ENCODE measurements at regions of chr6 and their contacts with region 1.

Region 1: DNA sequence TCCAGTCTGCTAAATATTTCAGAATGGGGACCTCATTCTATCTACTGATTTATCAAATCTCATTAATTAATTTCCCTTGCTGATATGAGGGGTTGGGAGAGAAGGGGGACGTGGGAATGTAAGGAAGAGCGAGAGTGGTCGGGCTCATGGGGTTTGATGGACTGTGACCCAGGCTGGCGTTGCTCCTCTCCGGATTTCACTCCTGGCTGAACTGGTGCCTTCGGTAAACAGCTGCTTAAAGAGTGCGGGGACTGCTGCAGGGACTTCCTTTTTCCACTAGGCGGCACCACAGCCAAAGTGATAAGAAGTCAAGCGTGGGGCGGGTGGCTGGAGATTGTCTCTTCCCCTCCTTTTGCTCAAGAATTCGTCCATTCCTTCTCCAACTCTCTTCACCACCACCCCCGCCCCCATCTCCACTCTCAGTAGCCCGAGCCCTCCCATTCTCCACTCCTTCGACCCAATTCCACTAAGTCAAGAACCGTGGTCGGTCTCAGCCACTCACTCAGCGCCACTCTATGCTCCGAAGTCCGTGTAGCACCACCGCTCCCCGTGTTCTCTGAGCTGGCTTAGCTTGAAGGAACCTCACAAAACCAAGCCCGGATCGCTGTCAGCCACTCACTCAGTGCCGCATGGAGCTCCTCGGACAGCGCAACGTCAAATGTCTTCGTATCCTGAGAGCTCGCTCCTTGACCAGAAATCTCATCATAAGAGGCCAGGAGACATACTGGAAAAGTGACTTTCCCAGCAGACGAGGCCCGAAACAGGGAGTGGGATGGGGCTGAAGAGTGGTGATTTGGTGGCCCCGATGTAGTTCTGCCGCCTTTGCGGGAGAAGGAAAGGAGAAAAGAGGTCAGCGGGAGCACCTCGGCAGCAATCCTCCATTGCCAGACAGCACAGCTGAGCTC is 9.7 kb downstream of the TRIM31 start:
- DNase-seq: peak; percentile 73
- H3K4me3 ChIP-seq: peak overlapping the region; percentile 43 to 53 (median 43)
- H3K27ac ChIP-seq: no peak overlapping the region
- H3K4me1 ChIP-seq: peaks cover 33% of the 10 kb centered on the region
- H3K27me3 ChIP-seq: no peaks in the 10 kb centered on the region
- CTCF ChIP-seq: peak; percentile 91 to 94

Region 2: DNA sequence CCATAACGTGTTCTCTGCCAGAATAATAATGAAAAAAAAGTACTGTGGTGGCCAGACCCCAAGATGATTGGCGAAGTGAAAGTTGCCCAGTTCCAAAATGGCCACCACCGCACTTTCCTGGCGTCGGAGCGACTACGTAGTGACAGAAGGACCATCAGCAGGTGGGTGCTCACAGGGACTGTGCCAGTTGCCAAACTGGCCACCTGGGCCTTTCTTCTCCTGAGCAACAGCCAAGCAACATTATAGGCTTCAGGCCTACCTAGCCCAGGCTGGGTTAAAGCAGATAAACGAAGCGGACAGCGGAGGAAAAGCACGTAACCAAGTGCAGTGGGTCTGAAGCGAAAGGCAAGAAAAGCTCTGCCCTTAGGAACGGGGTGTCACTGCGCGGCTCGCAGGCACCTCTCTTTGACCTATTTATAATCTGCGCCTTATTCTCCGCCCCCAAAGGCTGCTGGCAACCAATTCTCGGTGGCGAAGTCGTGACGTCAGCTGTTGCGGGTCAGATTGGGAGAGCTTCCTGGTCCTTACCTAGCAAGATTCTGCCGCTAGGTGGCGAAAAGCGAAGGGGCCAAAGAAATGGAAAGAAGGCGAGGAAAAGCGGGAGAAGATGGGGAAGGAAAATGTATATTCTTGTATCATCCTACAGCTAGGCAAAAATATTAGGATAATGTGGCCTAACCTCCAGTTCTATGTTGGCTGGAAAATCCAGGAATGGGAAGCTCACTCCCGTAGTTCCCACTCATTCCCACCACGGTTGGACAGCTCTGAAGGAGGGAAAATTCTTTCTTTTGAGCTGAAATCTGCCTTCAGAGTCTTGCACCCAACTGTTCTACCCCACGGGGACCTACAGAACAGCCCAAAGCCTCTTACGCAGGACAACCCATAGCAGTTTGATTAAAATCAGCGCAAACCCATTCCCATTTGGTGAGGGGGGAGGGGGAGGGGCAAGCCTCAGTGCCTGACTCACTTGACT is 453.2 kb before region 1 on chr6:
- CTCF ChIA-PET with region 1: interaction called, 19 read pairs
- dilution Hi-C with region 1: no loop called
- in situ Hi-C with region 1: no loop called
- intact Hi-C with region 1: no loop called
- DNase-seq: peak; percentile 96
- H3K4me3 ChIP-seq: peak overlapping the region; percentile 57 to 60 (median 59)
- H3K27ac ChIP-seq: peak overlapping the region; percentile 68
- H3K4me1 ChIP-seq: peaks cover 6% of the 10 kb centered on the region
- H3K27me3 ChIP-seq: no peaks in the 10 kb centered on the region
- CTCF ChIP-seq: peak; percentile 93 to 98

Region 3: DNA sequence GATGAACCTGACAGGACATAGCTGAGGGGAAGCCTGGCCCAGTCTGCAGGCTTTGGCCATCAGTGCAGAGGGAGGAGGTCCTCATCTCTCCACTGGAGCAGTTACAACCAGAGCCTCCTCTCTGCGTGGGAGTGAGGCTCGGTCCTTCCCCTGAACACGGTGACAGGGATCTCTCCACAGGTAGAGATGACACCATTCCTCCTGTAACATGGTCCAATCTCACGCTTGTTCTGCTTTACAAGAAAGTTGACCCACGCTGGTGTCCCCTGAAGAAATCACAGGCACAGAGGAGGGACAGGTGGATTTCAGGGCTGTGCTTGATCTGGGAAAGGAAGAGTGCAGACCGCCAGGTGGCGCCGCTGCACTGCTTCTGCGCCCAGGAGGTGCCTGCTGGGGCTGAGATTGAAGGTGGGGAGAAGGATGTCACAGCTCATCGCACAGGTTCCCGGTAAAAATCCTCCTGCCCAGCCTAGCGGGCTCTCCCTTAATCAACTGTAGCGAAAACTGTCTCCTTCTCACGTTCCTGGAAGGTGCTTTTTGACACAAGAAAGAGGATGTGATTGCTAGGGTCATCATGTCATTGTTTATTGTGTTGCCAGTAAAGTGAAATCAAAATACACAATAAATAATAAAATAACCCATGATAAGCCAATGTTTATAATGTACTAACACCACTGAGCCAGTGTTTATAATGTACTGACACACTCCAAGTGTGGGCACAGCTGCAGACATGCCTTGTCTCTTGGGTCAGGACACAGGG is 255.2 kb before region 1 on chr6:
- CTCF ChIA-PET with region 1: no interaction called
- dilution Hi-C with region 1: no loop called
- in situ Hi-C with region 1: no loop called
- intact Hi-C with region 1: loop called (anchors 2 kb)
- DNase-seq: peak; percentile 56
- H3K4me3 ChIP-seq: no peak overlapping the region
- H3K27ac ChIP-seq: no peak overlapping the region
- H3K4me1 ChIP-seq: peaks cover 5% of the 10 kb centered on the region
- H3K27me3 ChIP-seq: no peaks in the 10 kb centered on the region
- CTCF ChIP-seq: peak; percentile 78 to 96

Region 4: GRCh38 chr6:30061092-30061857 is 41.9 kb before region 1 on chr6 and contains the start of gene POLR1H:
- CTCF ChIA-PET with region 1: interaction called, 4 read pairs
- dilution Hi-C with region 1: no loop called
- in situ Hi-C with region 1: no loop called
- intact Hi-C with region 1: loop called (anchors 1 kb)
- DNase-seq: peak; percentile 95
- H3K4me3 ChIP-seq: peak within 1 kb of the TSS; percentile 90 to 94 (median 91)
- H3K27ac ChIP-seq: peak within 1 kb of the TSS; percentile 87
- H3K4me1 ChIP-seq: peaks cover 27% of the 10 kb centered on the region
- H3K27me3 ChIP-seq: no peaks in the 10 kb centered on the region
- CTCF ChIP-seq: no peak
- total RNA-seq, gene POLR1H: 18.8 to 33.3 TPM

Region 5: GRCh38 chr6:30130887-30131862 is 28.0 kb after region 1 on chr6:
- CTCF ChIA-PET with region 1: interaction called, 19 read pairs
- dilution Hi-C with region 1: no loop called
- in situ Hi-C with region 1: no loop called
- intact Hi-C with region 1: loop called (anchors 1 kb)
- DNase-seq: peak; percentile 72
- H3K4me3 ChIP-seq: no peak overlapping the region
- H3K27ac ChIP-seq: no peak overlapping the region
- H3K4me1 ChIP-seq: peaks cover 3% of the 10 kb centered on the region
- H3K27me3 ChIP-seq: peaks cover 7% of the 10 kb centered on the region
- CTCF ChIP-seq: peak; percentile 100

Region 6: DNA sequence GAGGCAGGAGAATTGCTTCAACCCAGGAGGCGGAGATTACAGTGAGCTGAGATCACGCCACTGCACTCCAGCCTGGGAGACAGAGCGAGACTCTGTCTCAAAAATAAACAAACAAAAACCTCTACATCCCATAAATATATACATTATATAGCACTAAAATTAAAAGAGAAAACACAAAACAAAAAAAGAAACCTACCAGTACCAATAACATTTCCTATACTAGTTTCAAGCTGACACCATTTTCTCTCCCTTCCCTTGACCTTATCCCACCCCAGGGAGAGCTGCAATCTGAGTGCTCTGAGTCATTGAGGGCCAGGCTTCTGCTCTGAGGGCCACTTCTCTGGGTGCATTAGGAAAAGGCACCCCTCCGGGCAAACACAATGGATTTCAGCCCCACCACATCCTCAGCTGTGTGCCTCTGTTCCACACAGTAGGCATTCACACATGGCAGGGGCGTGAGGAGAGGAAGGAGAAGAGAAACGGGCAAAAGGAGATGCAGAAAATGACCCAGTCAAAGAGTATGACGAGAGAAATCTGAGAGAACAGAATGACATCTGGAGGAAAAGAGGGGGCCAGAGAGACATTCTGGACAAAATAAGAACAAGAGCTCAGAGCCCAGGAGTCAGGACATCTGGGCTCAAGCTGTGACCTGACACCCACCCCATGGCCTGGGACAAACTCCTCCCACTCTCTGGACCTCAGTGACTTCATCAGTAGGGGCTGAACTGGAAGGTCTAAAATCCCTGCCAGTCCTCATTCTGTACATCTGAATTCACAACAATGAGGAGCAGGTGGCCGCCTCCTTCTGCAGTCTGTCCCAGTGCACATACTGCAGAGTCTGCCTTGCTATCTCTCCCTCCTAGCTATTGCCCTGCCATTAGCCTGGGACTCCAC is 91.8 kb after region 1 on chr6:
- CTCF ChIA-PET with region 1: no interaction called
- dilution Hi-C with region 1: no loop called
- in situ Hi-C with region 1: no loop called
- intact Hi-C with region 1: no loop called
- DNase-seq: no peak
- H3K4me3 ChIP-seq: no peak overlapping the region
- H3K27ac ChIP-seq: no peak overlapping the region
- H3K4me1 ChIP-seq: no peaks in the 10 kb centered on the region
- H3K27me3 ChIP-seq: no peaks in the 10 kb centered on the region
- CTCF ChIP-seq: no peak

Region 7: GRCh38 chr6:30259140-30260035 is 156.2 kb after region 1 on chr6:
- CTCF ChIA-PET with region 1: no interaction called
- dilution Hi-C with region 1: no loop called
- in situ Hi-C with region 1: no loop called
- intact Hi-C with region 1: loop called (anchors 5 kb)
- DNase-seq: peak; percentile 88
- H3K4me3 ChIP-seq: peak overlapping the region; percentile 69 to 90 (median 75)
- H3K27ac ChIP-seq: peak overlapping the region; percentile 72
- H3K4me1 ChIP-seq: peaks cover 16% of the 10 kb centered on the region
- H3K27me3 ChIP-seq: no peaks in the 10 kb centered on the region
- CTCF ChIP-seq: peak; percentile 10 to 47

Region 8: GRCh38 chr6:30344868-30345671 is 241.8 kb after region 1 on chr6 and contains the start of gene RPP21:
- CTCF ChIA-PET with region 1: no interaction called
- dilution Hi-C with region 1: no loop called
- in situ Hi-C with region 1: no loop called
- intact Hi-C with region 1: loop called (anchors 5 kb)
- DNase-seq: peak; percentile 81
- H3K4me3 ChIP-seq: peak within 1 kb of the TSS; percentile 89 to 96 (median 90)
- H3K27ac ChIP-seq: peak within 1 kb of the TSS; percentile 52
- H3K4me1 ChIP-seq: peaks cover 4% of the 10 kb centered on the region
- H3K27me3 ChIP-seq: no peaks in the 10 kb centered on the region
- CTCF ChIP-seq: no peak
- total RNA-seq, gene RPP21: 19.0 to 41.3 TPM